ENCODE measurements at regions of chr6 and their contacts with region 1.

Region 1: GRCh38 chr6:137589067-137589848 is 95.1 kb upstream of the OLIG3 start:
- DNase-seq: peak; percentile 66 to 85 (median 77)
- H3K4me3 ChIP-seq: no peak overlapping the region
- H3K4me3 Mint-ChIP-seq: peak overlapping the region in 3 of 8 donors; percentile 15 to 69 (median 27)
- H3K27ac ChIP-seq: no peak overlapping the region
- H3K27ac Mint-ChIP-seq: peak overlapping the region in 4 of 7 donors; percentile 5 to 30 (median 14)
- H3K4me1 ChIP-seq: peaks cover 14% of the 10 kb centered on the region
- H3K4me1 Mint-ChIP-seq: peaks cover 9 to 19% (median 14%) of the 10 kb centered on the region in 4 donors
- H3K27me3 ChIP-seq: peaks cover 4% of the 10 kb centered on the region
- H3K27me3 Mint-ChIP-seq: peaks cover 9% of the 10 kb centered on the region in 2 donors

Region 2: GRCh38 chr6:137341681-137342195 is 247.5 kb before region 1 on chr6:
- CTCF ChIA-PET with region 1: interaction called, 106 read pairs
- POLR2A ChIA-PET with region 1: interaction called, 7 read pairs
- intact Hi-C with region 1: loop called (anchors 1 kb)
- DNase-seq: peak; percentile 56 to 67 (median 62)
- H3K4me3 ChIP-seq: no peak overlapping the region
- H3K4me3 Mint-ChIP-seq: peak overlapping the region; percentile 4 to 92 (median 76)
- H3K27ac ChIP-seq: no peak overlapping the region
- H3K27ac Mint-ChIP-seq: peak overlapping the region in 1 of 7 donors; percentile 15
- H3K4me1 ChIP-seq: peaks cover 18% of the 10 kb centered on the region
- H3K4me1 Mint-ChIP-seq: peaks cover 15 to 32% (median 20%) of the 10 kb centered on the region in 4 donors
- H3K27me3 ChIP-seq: no peaks in the 10 kb centered on the region
- H3K27me3 Mint-ChIP-seq: no peaks in the 10 kb centered on the region

Region 3: GRCh38 chr6:137497721-137498463 is 91.4 kb before region 1 on chr6:
- CTCF ChIA-PET with region 1: interaction called, 20 read pairs
- POLR2A ChIA-PET with region 1: interaction called, 9 read pairs
- intact Hi-C with region 1: loop called (anchors 5 kb)
- DNase-seq: peak in 2 of 5 donors; percentile 37 to 41
- H3K4me3 ChIP-seq: peak overlapping the region in 1 of 2 donors; percentile 16
- H3K4me3 Mint-ChIP-seq: peak overlapping the region; percentile 46 to 86 (median 69)
- H3K27ac ChIP-seq: no peak overlapping the region
- H3K27ac Mint-ChIP-seq: peak overlapping the region in 2 of 7 donors; percentile 68 to 72
- H3K4me1 ChIP-seq: peaks cover 53% of the 10 kb centered on the region
- H3K4me1 Mint-ChIP-seq: peaks cover 21 to 51% (median 37%) of the 10 kb centered on the region in 4 donors
- H3K27me3 ChIP-seq: peaks cover 66% of the 10 kb centered on the region
- H3K27me3 Mint-ChIP-seq: peaks cover 55 to 59% of the 10 kb centered on the region in 2 donors

Region 4: GRCh38 chr6:137552809-137553208 is 36.4 kb before region 1 on chr6:
- CTCF ChIA-PET with region 1: interaction called, 8 read pairs
- POLR2A ChIA-PET with region 1: no interaction called
- intact Hi-C with region 1: loop called (anchors 2 kb)
- DNase-seq: no peak
- H3K4me3 ChIP-seq: no peak overlapping the region
- H3K4me3 Mint-ChIP-seq: no peak overlapping the region
- H3K27ac ChIP-seq: no peak overlapping the region
- H3K27ac Mint-ChIP-seq: no peak overlapping the region
- H3K4me1 ChIP-seq: peaks cover 3% of the 10 kb centered on the region
- H3K4me1 Mint-ChIP-seq: peaks cover 3 to 18% (median 9%) of the 10 kb centered on the region in 4 donors
- H3K27me3 ChIP-seq: no peaks in the 10 kb centered on the region
- H3K27me3 Mint-ChIP-seq: peaks cover 0 to 4% of the 10 kb centered on the region in 2 donors

Region 5: DNA sequence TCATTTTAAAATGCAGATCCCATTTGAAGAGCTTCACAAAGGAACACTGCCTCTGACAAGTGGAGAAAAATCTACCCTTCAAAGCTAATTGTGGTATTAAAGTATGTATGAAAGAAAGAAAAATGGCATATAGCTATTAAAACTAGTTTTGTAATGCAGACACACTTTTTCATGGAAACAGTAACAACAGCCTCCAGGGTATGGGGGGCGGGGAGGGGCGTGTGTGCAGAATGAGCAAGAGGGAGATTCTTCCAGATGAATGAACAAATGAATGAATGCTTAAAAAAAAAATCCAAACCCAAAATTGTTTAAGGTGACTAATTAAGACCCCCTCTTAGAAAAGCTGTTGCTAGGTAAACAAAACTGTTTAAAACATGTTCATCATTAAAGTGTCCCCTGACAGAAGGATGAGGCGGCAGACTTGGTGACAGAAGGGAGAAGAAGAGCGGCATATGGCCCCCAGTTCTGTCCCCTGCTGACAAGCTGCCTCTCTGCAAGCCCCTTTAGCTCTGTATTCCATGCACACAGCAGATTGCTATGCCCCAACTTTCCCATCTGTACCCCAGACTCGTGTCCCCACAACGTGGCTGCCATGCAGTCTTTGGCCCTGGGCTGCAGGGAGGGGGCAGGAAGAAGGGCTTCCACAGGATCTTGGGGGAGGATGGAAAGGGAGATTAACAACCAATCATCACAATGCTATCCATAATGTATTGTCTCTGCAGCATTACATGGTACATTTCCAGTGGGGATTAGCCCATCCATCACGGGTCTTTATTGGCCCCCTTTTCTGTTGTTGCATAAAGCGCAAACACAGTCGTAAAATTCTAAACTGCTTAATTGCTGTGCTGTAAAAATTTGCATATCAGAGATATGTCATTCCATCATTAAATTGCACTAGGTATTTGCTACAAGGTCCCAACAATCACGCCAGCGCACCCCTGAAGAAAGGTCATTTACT is 13.3 kb after region 1 on chr6:
- CTCF ChIA-PET with region 1: interaction called, 11 read pairs
- POLR2A ChIA-PET with region 1: no interaction called
- intact Hi-C with region 1: no loop called
- DNase-seq: no peak
- H3K4me3 ChIP-seq: no peak overlapping the region
- H3K4me3 Mint-ChIP-seq: peak overlapping the region in 1 of 8 donors; percentile 22
- H3K27ac ChIP-seq: no peak overlapping the region
- H3K27ac Mint-ChIP-seq: no peak overlapping the region
- H3K4me1 ChIP-seq: no peaks in the 10 kb centered on the region
- H3K4me1 Mint-ChIP-seq: no peaks in the 10 kb centered on the region
- H3K27me3 ChIP-seq: no peaks in the 10 kb centered on the region
- H3K27me3 Mint-ChIP-seq: peaks cover 24 to 28% of the 10 kb centered on the region in 2 donors

Region 6: GRCh38 chr6:137705160-137706082 is 116.2 kb after region 1 on chr6:
- CTCF ChIA-PET with region 1: no interaction called
- POLR2A ChIA-PET with region 1: no interaction called
- intact Hi-C with region 1: no loop called
- DNase-seq: peak; percentile 70 to 77 (median 75)
- H3K4me3 ChIP-seq: no peak overlapping the region
- H3K4me3 Mint-ChIP-seq: peak overlapping the region in 2 of 8 donors; percentile 22 to 31
- H3K27ac ChIP-seq: peak overlapping the region; percentile 77
- H3K27ac Mint-ChIP-seq: peak overlapping the region in 6 of 7 donors; percentile 93 to 99 (median 98)
- H3K4me1 ChIP-seq: peaks cover 55% of the 10 kb centered on the region
- H3K4me1 Mint-ChIP-seq: peaks cover 31 to 55% (median 47%) of the 10 kb centered on the region in 4 donors
- H3K27me3 ChIP-seq: no peaks in the 10 kb centered on the region
- H3K27me3 Mint-ChIP-seq: peaks cover 0 to 5% of the 10 kb centered on the region in 2 donors

Measured in CD4-positive, alpha-beta memory T cell (primary cell).